OCI-LY7 (cell line): ENCODE measurements at regions of chr12 and their contacts with region 1.

Region 1: DNA sequence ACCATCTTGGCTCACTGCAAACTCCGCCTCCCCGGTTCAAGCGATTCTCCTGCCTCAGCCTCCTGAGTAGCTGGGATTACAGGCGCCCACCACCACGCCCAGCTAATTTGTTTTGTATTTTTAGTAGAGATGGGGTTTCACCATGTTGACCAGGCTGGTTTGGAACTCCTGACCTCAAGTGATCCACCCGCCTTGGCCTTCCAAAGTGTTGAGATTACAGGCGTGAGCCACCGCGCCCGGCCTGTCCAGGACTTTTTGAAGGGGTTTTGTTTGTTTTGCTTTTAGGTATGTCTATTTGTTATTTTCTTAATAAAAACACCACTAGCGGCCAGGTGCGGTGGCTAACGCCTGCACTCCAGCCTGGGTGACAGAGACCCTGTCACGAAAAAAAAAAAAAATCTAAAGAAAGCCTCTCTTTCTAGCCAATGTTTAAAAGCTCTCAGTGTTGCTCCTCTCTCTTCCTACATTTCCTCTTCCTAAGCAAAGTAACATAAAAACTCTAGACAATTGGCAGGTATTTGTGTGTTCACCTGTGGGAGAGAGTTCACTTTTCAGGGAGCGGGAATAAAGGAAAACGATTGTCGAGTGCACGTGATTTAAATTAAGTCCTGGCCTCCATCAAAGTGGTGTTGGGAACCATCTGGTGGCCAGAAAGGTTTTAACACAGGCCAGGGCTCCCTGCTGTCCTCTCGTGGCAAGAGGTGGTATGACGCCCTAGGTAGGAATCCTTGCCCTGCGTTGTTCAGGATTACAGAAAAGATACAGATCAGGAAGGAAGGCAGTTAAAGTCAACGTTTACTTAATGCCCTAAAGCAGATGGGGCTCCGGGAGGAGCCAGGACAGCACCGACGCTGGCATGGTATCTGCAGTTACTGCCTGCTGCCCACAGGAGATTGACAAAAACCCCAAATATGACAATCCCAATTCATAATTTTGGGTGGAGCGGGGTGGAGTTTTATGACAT is 36.2 kb upstream of the ATP23 start:
- DNase-seq: peak; percentile 88
- H3K4me3 ChIP-seq: no peak overlapping the region
- H3K27ac ChIP-seq: no peak overlapping the region
- H3K4me1 ChIP-seq: peaks cover 9% of the 10 kb centered on the region
- CTCF ChIP-seq: peak; percentile 100

Region 2: GRCh38 chr12:57782608-57783465 is 122.3 kb before region 1 on chr12 and contains the start of gene TSFM:
- CTCF ChIA-PET with region 1: no interaction called
- POLR2A ChIA-PET with region 1: interaction called, 3 read pairs
- intact Hi-C with region 1: loop called (anchors 5 kb)
- DNase-seq: peak; percentile 97
- H3K4me3 ChIP-seq: peak within 1 kb of the TSS; percentile 95
- H3K27ac ChIP-seq: peak within 1 kb of the TSS; percentile 18
- H3K4me1 ChIP-seq: peaks cover 20% of the 10 kb centered on the region
- CTCF ChIP-seq: peak; percentile 94
- total RNA-seq, gene TSFM: 35.2 and 49.8 TPM in 2 replicates

Region 3: GRCh38 chr12:57803319-57803893 is 101.7 kb before region 1 on chr12:
- CTCF ChIA-PET with region 1: interaction called, 3 read pairs
- POLR2A ChIA-PET with region 1: interaction called, 5 read pairs
- intact Hi-C with region 1: loop called (anchors 1 kb)
- DNase-seq: peak; percentile 43
- H3K4me3 ChIP-seq: no peak overlapping the region
- H3K27ac ChIP-seq: no peak overlapping the region
- H3K4me1 ChIP-seq: no peaks in the 10 kb centered on the region
- CTCF ChIP-seq: peak; percentile 89

Region 4: GRCh38 chr12:57836442-57837375 is 68.4 kb before region 1 on chr12:
- CTCF ChIA-PET with region 1: interaction called, 6 read pairs
- POLR2A ChIA-PET with region 1: interaction called, 77 read pairs
- intact Hi-C with region 1: loop called (anchors 1 kb)
- DNase-seq: peak; percentile 83
- H3K4me3 ChIP-seq: peak overlapping the region; percentile 59
- H3K27ac ChIP-seq: peak overlapping the region; percentile 80
- H3K4me1 ChIP-seq: peaks cover 100% of the 10 kb centered on the region
- CTCF ChIP-seq: no peak

Region 5: DNA sequence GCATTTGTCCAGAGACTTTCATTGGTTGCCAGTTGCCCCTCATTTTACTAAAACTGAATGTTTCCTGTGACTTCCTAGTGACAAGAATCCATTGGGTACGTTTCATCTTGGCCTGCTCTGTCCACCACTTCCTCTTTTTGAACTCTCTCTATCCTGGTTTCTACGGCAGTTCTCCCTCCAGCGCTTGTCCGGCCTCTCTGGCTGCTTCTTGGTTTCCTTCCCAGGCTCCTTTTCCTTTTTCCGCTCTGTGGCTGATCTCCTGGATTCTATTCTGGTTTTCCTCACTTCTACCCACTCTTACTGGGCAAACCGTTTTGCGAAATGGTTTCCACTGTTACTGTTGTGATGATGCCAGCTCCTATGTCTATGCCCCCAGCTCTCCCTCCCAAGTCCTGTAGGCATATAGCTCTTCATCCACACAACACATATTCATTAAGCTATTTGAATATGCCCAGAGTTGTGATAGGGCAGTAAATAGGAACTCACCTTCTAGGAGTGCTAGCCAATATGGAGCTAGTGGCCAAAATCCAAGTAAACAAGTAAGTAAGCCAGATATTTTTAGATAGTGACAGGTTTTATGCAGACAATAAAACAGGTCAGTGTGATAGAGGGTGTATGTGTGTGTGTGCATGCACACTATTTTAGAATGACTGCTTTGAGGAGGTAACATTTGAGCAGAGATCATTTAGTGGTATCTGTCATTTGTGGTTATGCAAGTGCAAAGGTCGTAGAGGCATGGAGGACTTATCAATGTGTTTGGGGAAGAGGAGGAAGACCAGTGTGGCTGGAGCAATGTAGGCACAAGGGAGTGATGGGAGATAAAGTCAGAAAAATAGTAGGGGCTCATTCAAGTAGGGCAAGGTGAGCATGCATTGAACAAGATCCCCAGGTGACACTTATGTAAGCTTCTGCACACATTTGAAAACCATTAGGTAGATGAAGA is 30.7 kb before region 1 on chr12:
- CTCF ChIA-PET with region 1: no interaction called
- POLR2A ChIA-PET with region 1: no interaction called
- intact Hi-C with region 1: no loop called
- DNase-seq: no peak
- H3K4me3 ChIP-seq: no peak overlapping the region
- H3K27ac ChIP-seq: no peak overlapping the region
- H3K4me1 ChIP-seq: no peaks in the 10 kb centered on the region
- CTCF ChIP-seq: no peak